ENCODE measurements at regions of chr10 and their contacts with region 1.

Region 1: GRCh38 chr10:133292919-133293809 is 15.5 kb downstream of the TUBGCP2 start:
- DNase-seq: peak; percentile 96 to 99 (median 96)
- H3K4me3 ChIP-seq: peak overlapping the region in 1 of 3 experiments; percentile 30
- H3K4me3 Mint-ChIP-seq: peak overlapping the region in 1 of 2 donors; percentile 21
- H3K27ac ChIP-seq: peak overlapping the region; percentile 84 to 95
- H3K27ac Mint-ChIP-seq: peak overlapping the region; percentile 90 to 96 (median 95)
- H3K4me1 ChIP-seq: peaks cover 25 to 33% of the 10 kb centered on the region in 2 donors
- H3K4me1 Mint-ChIP-seq: peaks cover 25% of the 10 kb centered on the region
- H3K27me3 ChIP-seq: no peaks in the 10 kb centered on the region
- H3K27me3 Mint-ChIP-seq: peaks cover 0 to 4% (median 0%) of the 10 kb centered on the region in 3 donors
- CTCF ChIP-seq: no peak

Region 2: DNA sequence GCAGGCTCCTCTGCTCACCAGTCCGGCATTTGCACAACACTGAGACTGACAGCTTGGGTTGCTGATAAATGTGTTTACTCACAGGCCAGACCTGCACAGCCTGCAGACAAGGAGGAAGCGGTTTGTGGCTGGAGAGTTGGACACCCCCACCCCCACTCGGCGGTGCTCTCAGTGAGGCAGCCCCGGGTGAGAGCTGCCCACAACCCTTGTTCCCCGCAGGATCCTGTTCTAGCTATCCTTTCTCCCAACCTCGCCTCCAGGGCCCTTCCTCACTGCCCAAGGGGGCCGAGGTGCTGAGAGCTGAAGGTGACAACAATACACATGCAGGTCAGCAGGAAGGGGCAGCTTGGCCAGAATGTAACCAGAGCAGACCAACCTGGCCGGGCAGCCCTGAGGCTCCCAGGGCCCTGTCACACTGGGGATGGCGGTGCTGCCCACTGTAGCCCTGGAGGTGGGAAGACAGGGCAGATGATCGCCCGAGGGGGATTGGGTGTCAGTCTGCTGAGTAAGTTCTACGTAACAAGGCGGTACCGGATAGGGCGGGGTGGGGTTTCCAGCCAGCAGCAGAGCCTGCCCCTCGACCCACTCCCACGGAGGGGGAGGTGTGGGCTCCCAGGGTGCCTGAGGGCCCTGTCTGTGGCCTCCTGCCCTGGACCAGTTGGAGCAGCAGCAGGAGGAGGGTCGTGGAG is 14.4 kb before region 1 on chr10:
- intact Hi-C with region 1: loop called in 1 of 2 experiments (anchors 2 kb)
- DNase-seq: peak; percentile 96 to 98 (median 97)
- H3K4me3 ChIP-seq: peak overlapping the region in 2 of 3 experiments; percentile 21 to 94
- H3K4me3 Mint-ChIP-seq: peak overlapping the region; percentile 83 to 91
- H3K27ac ChIP-seq: peak overlapping the region; percentile 96 to 99
- H3K27ac Mint-ChIP-seq: peak overlapping the region; percentile 99 to 100 (median 100)
- H3K4me1 ChIP-seq: peaks cover 73 to 78% of the 10 kb centered on the region in 2 donors
- H3K4me1 Mint-ChIP-seq: peaks cover 57% of the 10 kb centered on the region
- H3K27me3 ChIP-seq: no peaks in the 10 kb centered on the region
- H3K27me3 Mint-ChIP-seq: peaks cover 0 to 14% (median 2%) of the 10 kb centered on the region in 3 donors
- CTCF ChIP-seq: no peak

Measured in CD14-positive monocyte (primary cell).